Right cardiac atrium (tissue), 5 donors: ENCODE measurements at regions of chr15 and their contacts with region 1.

Region 1: GRCh38 chr15:42084460-42085235 is 9.7 kb downstream of the PLA2G4D start:
- DNase-seq: peak; percentile 61 to 83 (median 83)
- ATAC-seq: peak; percentile 76 to 88
- H3K4me3 ChIP-seq: no peak overlapping the region
- H3K27ac ChIP-seq: no peak overlapping the region
- H3K4me1 ChIP-seq: no peaks in the 10 kb centered on the region
- H3K27me3 ChIP-seq: no peaks in the 10 kb centered on the region

Region 2: DNA sequence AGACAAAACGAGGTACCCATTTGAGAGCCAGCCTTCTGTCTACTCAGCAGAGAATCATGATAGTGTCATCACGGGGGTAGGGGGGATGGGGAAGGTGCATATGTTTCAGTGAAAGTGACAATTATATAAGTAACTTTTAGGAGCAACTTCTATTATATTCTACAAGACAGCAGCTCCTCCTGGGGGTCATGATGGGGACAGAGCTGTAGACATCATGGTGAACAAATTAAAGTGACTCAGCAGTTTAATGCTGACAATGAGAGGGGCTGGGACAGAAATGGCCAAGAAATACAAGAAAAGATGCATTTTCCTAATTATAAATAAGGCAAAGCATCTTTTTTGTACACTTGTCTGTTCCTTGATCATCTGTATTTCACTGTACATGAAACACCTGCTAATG is 286.5 kb after region 1 on chr15:
- intact Hi-C with region 1: loop called in 1 of 4 experiments (anchors 10 kb)
- DNase-seq: no peak
- ATAC-seq: no peak
- H3K4me3 ChIP-seq: no peak overlapping the region
- H3K27ac ChIP-seq: no peak overlapping the region
- H3K4me1 ChIP-seq: no peaks in the 10 kb centered on the region
- H3K27me3 ChIP-seq: no peaks in the 10 kb centered on the region